Activated CD4-positive, alpha-beta memory T cell treated with anti-CD3 and anti-CD28 coated beads, Interleukin-2, amount 10 ng/mL, durations not matched to agents 7 days and 5 days (primary cell): ENCODE measurements at regions of chr6 and their contacts with region 1.

Region 1: GRCh38 chr6:10256113-10256690 is 158.7 kb downstream of the TFAP2A start:
- DNase-seq: no peak
- H3K4me3 Mint-ChIP-seq: no peak overlapping the region
- H3K27ac Mint-ChIP-seq: no peak overlapping the region
- H3K4me1 Mint-ChIP-seq: no peaks in the 10 kb centered on the region
- H3K27me3 Mint-ChIP-seq: no peaks in the 10 kb centered on the region

Region 2: GRCh38 chr6:10429638-10430427 is 173.6 kb after region 1 on chr6:
- CTCF ChIA-PET with region 1: interaction called, 14 read pairs
- POLR2A ChIA-PET with region 1: no interaction called
- DNase-seq: no peak
- H3K4me3 Mint-ChIP-seq: no peak overlapping the region
- H3K27ac Mint-ChIP-seq: no peak overlapping the region
- H3K4me1 Mint-ChIP-seq: peaks cover 34% of the 10 kb centered on the region
- H3K27me3 Mint-ChIP-seq: peaks cover 39% of the 10 kb centered on the region

Region 3: DNA sequence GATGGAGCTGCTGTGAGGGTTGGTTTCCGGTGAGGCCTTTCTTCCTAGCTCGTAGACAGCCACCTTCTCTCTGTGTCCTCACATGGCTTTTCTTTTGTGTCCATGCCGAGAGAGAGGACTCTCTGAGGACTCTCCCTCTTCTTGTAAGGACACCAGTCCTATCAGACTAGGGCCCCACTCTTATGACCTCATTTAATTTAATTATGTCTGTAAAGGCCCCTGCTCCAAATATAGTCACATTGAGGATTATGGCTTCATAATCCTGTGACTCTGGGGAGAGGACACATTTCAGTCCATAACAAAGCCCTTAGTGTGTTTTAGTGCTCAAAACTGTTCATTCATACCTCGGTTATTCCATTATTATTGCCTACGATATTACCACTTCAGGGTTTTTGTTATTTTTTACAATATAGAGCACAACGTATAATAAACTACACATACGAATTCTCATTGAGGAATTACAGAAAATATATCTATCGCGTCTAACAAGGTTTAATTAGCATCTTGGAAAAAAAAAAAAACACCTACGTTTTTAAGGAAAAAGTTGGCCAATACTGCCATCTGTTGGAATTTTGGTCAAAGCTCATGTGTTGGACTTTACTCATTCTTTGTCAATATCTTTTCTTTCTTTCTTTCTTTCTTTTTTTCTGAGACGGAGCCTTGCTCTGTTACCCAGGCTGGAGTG is 178.6 kb after region 1 on chr6:
- CTCF ChIA-PET with region 1: interaction called, 14 read pairs
- POLR2A ChIA-PET with region 1: no interaction called
- DNase-seq: no peak
- H3K4me3 Mint-ChIP-seq: no peak overlapping the region
- H3K27ac Mint-ChIP-seq: no peak overlapping the region
- H3K4me1 Mint-ChIP-seq: peaks cover 25% of the 10 kb centered on the region
- H3K27me3 Mint-ChIP-seq: peaks cover 6% of the 10 kb centered on the region

Region 4: GRCh38 chr6:11947063-11947974 is 1691.1 kb after region 1 on chr6:
- CTCF ChIA-PET with region 1: no interaction called
- POLR2A ChIA-PET with region 1: no interaction called
- DNase-seq: no peak
- H3K4me3 Mint-ChIP-seq: no peak overlapping the region
- H3K27ac Mint-ChIP-seq: no peak overlapping the region
- H3K4me1 Mint-ChIP-seq: no peaks in the 10 kb centered on the region
- H3K27me3 Mint-ChIP-seq: peaks cover 3% of the 10 kb centered on the region